ENCODE measurements at regions of chr21 and their contacts with region 1.

Region 1: GRCh38 chr21:29145354-29145782 is 14.9 kb downstream of the MAP3K7CL start:
- DNase-seq: no peak
- H3K4me3 ChIP-seq: no peak overlapping the region
- H3K27ac ChIP-seq: peak overlapping the region; percentile 67 to 78 (median 71)
- H3K4me1 ChIP-seq: peaks cover 11 to 54% (median 37%) of the 10 kb centered on the region in 4 donors
- H3K27me3 ChIP-seq: no peaks in the 10 kb centered on the region
- CTCF ChIP-seq: no peak
- EP300 ChIP-seq: no peak
- POLR2A ChIP-seq: no peak

Region 2: GRCh38 chr21:29078869-29079767 is 66.2 kb before region 1 on chr21:
- intact Hi-C with region 1: loop called (anchors 5 kb)
- DNase-seq: no peak
- H3K4me3 ChIP-seq: no peak overlapping the region
- H3K27ac ChIP-seq: peak overlapping the region in 1 of 4 donors; percentile 10
- H3K4me1 ChIP-seq: peaks cover 8 to 41% (median 11%) of the 10 kb centered on the region in 4 donors
- H3K27me3 ChIP-seq: no peaks in the 10 kb centered on the region
- CTCF ChIP-seq: no peak
- EP300 ChIP-seq: no peak
- POLR2A ChIP-seq: no peak

Region 3: DNA sequence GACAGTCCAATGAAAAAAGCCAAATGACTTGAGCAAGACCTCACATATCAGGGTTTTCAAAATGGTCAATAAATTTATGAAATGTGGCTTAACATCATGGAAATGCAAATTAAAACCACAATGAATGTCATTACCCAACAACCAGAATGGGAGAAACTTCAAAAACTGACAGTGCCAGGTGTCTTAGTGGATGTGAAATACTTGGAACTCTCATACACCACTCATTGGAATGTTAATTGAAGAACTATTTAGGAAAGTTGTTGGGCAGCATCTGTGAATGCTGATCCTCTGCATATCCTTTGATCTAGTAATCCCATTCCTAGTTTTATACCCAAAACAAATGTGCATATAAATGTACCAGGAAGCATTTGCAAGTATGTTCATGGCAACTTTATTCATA is 134.2 kb after region 1 on chr21:
- intact Hi-C with region 1: no loop called
- DNase-seq: no peak
- H3K4me3 ChIP-seq: no peak overlapping the region
- H3K27ac ChIP-seq: no peak overlapping the region
- H3K4me1 ChIP-seq: no peaks in the 10 kb centered on the region
- H3K27me3 ChIP-seq: no peaks in the 10 kb centered on the region
- CTCF ChIP-seq: no peak
- EP300 ChIP-seq: no peak
- POLR2A ChIP-seq: no peak